Endothelial cell of umbilical vein (primary cell): ENCODE measurements at regions of chr12 and their contacts with region 1.

Region 1: DNA sequence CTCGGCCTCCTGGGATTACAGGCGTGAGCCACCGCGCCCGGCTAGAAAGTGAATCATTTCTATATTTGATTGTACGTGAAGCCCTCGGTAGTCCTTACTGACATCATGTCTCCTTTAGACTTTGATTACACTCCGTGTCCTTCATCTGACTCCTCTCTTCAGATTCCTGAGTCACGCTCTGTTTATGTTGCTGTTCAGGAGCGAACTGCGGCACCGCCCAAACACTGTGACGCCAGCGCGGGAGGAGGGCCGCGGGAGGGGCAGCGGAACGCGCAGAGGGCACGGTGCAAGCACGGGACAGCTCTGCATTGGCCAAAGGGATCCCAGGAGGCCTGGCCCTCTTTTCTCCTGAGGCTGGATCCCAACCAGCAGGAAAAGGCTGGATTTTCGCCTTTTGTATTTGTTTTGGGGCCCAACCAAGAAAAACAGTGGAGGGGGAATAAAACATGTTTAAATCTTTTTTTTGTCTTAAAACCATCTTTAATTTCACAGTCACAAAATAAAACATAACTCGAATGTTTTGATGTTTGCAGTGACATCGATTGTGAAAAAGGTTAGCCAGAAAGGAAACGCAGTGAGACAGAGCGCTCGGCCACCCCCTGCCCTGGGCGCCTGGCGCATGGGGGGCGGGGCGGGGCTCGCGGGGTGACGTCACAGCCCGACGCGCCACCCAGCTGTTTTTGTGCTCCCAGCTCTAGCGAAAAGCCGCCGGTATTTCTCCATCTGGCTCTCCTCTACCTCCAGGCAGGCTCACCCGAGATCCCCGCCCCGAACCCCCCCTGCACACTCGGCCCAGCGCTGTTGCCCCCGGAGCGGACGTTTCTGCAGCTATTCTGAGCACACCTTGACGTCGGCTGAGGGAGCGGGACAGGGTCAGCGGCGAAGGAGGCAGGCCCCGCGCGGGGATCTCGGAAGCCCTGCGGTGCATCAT is at the start of gene GABARAPL1:
- DNase-seq: peak; percentile 100
- H3K4me3 ChIP-seq: peak within 1 kb of the TSS; percentile 46 to 99 (median 93)
- H3K27ac ChIP-seq: peak within 1 kb of the TSS; percentile 96
- H3K4me1 ChIP-seq: peaks cover 11% of the 10 kb centered on the region
- H3K27me3 ChIP-seq: no peaks in the 10 kb centered on the region
- CTCF ChIP-seq: no peak
- POLR2A ChIP-seq: no peak
- total RNA-seq, gene GABARAPL1: 59.4 and 69.0 TPM in 2 replicates

Region 2: DNA sequence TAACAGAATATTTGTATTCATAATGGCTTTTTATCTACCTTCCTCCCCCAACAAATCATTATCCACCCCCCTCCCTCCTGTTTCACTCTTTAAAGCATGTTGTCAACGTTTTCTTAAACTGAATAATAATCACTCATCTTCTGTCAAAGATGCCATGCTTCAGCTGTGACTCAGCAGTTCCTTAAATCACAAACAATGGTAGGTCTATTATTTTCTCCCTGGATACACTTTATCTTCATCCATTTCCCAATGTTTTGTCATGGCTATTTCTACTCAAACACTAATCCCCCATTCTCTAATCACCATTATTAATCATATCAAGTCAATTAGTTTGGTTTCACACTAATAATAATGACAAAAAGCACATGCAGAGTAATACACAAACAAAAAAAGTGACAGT is 195.6 kb before region 1 on chr12:
- CTCF ChIA-PET with region 1: no interaction called
- POLR2A ChIA-PET with region 1: no interaction called
- dilution Hi-C with region 1: no loop called
- intact Hi-C with region 1: loop called (anchors 5 kb)
- DNase-seq: peak; percentile 86
- H3K4me3 ChIP-seq: no peak overlapping the region
- H3K27ac ChIP-seq: peak overlapping the region; percentile 99
- H3K4me1 ChIP-seq: peaks cover 27% of the 10 kb centered on the region
- H3K27me3 ChIP-seq: no peaks in the 10 kb centered on the region
- CTCF ChIP-seq: no peak
- POLR2A ChIP-seq: no peak

Region 3: GRCh38 chr12:10069099-10069498 is 143.4 kb before region 1 on chr12:
- CTCF ChIA-PET with region 1: no interaction called
- POLR2A ChIA-PET with region 1: interaction called, 10 read pairs
- dilution Hi-C with region 1: no loop called
- intact Hi-C with region 1: loop called (anchors 1 kb)
- DNase-seq: peak; percentile 94
- H3K4me3 ChIP-seq: no peak overlapping the region
- H3K27ac ChIP-seq: peak overlapping the region; percentile 98
- H3K4me1 ChIP-seq: peaks cover 44% of the 10 kb centered on the region
- H3K27me3 ChIP-seq: no peaks in the 10 kb centered on the region
- CTCF ChIP-seq: no peak
- POLR2A ChIP-seq: peak; percentile 25

Region 4: DNA sequence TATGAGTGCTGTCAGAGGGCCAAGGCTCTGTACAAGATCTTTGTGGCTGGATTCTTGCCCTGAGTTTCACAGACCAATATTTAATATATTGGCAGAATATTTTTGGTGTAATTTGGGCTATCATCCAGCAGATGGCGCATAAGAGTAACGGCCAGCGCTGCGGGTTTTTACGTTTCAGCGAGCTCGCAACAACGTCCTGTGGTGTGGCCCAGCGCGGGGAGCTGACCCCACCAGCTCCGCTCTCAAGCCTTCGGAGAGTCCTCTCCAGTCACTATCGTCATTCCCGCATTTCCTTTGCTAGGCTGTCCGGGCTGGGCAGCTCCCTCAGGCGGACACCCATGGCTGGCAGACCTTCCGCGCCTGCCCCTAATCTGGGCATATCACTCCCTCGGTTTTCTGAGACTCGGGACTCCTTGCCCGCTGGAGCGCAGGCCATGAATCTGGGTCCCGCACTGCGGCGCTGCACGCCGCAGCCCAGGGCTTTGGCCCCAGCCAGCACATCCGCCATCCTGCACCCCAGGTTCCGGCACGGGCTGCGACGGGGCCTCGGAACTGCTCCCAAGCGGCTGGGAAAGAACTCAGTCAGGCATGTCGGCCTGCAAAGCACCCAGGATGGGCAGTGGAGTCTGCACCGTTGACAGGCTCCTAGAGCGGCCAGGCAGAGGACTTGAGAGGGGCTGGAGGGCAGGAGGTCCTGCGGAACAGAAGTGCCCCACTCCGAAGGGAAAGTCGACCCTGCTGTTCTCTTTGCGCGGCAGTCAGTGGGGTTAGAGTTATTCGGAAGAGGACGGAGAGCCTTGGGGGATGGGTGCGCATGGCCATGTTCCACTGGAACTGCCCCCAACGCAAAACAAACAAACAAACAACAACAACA is 59.0 kb before region 1 on chr12:
- CTCF ChIA-PET with region 1: interaction called, 22 read pairs
- POLR2A ChIA-PET with region 1: interaction called, 5 read pairs
- dilution Hi-C with region 1: no loop called
- intact Hi-C with region 1: loop called (anchors 1 kb)
- DNase-seq: peak; percentile 81
- H3K4me3 ChIP-seq: peak overlapping the region; percentile 44 to 67 (median 48)
- H3K27ac ChIP-seq: peak overlapping the region; percentile 58
- H3K4me1 ChIP-seq: peaks cover 5% of the 10 kb centered on the region
- H3K27me3 ChIP-seq: peaks cover 0 to 2% of the 10 kb centered on the region in 2 experiments
- CTCF ChIP-seq: peak; percentile 70 to 72
- POLR2A ChIP-seq: no peak

Region 5: DNA sequence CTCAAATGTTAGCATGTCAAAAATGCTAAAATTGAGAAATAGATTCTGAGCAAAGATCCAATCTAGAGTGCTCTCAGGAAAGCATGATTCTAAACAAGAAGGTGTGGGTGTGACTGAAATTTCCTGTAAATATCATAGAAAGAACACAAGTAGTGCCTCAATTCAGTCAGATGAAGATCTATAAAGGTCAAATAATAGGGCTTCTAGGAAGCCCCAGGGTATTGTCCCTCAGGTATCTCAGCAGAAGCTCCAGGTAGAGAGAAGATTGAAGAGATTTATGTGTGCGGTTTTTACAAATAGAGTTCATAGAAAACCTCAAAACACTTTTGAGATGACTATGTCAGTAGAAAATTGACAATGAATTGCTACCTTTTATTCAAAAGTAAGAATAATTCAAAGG is 108.2 kb after region 1 on chr12:
- CTCF ChIA-PET with region 1: no interaction called
- POLR2A ChIA-PET with region 1: no interaction called
- dilution Hi-C with region 1: no loop called
- intact Hi-C with region 1: no loop called
- DNase-seq: no peak
- H3K4me3 ChIP-seq: no peak overlapping the region
- H3K27ac ChIP-seq: no peak overlapping the region
- H3K4me1 ChIP-seq: no peaks in the 10 kb centered on the region
- H3K27me3 ChIP-seq: no peaks in the 10 kb centered on the region
- CTCF ChIP-seq: no peak
- POLR2A ChIP-seq: no peak

Region 6: DNA sequence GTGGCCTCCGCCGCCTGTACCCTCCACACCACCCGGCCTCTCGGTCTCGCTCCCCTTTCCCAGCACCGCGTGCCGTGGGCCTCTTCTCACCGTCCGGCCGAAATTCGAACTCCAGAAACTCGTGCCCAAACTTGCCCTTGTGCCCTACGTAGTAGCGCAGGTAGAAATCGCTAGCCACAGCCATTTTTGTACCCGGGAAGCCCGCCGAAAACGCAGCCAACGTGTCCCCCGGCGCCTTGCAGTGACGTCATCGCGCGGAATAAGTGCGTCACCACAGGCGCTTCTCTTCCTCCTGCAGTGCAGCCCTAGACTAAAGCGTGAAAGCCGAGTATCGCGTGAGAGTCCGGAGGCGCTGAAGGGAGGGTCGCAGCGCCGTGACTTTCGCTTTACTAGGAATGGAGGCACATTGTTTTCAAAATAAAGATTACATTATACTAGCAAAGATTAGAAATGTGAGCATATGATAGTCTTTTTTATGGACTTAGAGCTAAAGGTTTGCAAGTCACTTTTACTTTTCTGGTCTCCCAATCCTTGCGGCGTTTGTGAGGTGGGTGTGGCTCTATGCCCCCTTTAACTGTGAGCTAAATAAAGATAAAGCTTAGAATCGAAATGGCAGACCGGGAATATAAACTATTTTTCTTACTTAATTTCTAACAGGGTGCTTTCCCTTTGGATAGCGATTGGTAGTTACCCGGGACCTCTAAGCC is 401.0 kb after region 1 on chr12 and contains the start of gene MAGOHB:
- CTCF ChIA-PET with region 1: no interaction called
- POLR2A ChIA-PET with region 1: no interaction called
- dilution Hi-C with region 1: no loop called
- intact Hi-C with region 1: loop called (anchors 1 kb)
- DNase-seq: peak; percentile 95
- H3K4me3 ChIP-seq: peak within 1 kb of the TSS; percentile 58 to 96 (median 93)
- H3K27ac ChIP-seq: peak within 1 kb of the TSS; percentile 90
- H3K4me1 ChIP-seq: peaks cover 18% of the 10 kb centered on the region
- H3K27me3 ChIP-seq: no peaks in the 10 kb centered on the region
- CTCF ChIP-seq: no peak
- POLR2A ChIP-seq: peak; percentile 70
- total RNA-seq, gene MAGOHB: 45.4 and 48.3 TPM in 2 replicates

Region 7: GRCh38 chr12:10624605-10625004 is 412.1 kb after region 1 on chr12:
- CTCF ChIA-PET with region 1: no interaction called
- POLR2A ChIA-PET with region 1: no interaction called
- dilution Hi-C with region 1: no loop called
- intact Hi-C with region 1: no loop called
- DNase-seq: no peak
- H3K4me3 ChIP-seq: no peak overlapping the region
- H3K27ac ChIP-seq: no peak overlapping the region
- H3K4me1 ChIP-seq: peaks cover 5% of the 10 kb centered on the region
- H3K27me3 ChIP-seq: no peaks in the 10 kb centered on the region
- CTCF ChIP-seq: no peak
- POLR2A ChIP-seq: no peak

Region 8: DNA sequence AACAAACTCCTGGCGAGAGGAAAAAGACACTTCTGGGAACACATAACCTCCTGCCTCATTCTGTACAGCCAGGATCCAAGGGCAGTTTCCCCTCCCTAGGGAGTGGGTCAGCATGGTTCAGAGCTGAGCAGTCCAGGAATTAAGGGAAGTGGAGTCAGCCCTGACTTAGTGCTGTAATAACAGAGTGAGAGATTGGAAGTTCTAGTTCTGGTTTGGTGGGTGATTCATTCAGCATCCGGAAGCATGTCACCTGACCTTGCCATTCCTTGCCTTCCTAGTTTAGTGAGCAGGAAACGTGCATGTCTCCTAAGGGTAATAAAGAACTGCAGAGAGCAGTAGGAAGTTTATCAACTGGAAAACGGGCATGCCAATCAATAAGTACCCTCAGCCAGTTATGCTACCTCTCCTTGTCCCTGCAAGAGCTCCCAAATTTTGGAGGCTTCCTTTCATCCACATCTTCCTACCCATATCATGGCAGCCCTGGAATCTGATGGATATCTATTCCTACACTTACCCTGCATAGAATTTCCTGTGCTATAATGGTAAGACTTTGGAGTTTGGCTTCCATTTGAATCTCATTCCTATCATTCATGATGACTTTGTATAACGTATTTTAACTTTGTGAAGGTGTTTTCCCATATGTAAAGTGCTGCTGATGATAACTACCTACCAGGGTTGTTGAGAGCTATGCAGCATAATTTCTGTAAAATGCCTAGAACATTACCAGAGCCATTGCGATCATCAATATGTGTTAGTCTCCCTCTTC is 429.5 kb after region 1 on chr12:
- CTCF ChIA-PET with region 1: no interaction called
- POLR2A ChIA-PET with region 1: no interaction called
- dilution Hi-C with region 1: no loop called
- intact Hi-C with region 1: loop called (anchors 1 kb)
- DNase-seq: peak; percentile 99
- H3K4me3 ChIP-seq: peak overlapping the region in 1 of 3 experiments; percentile 43
- H3K27ac ChIP-seq: peak overlapping the region; percentile 98
- H3K4me1 ChIP-seq: peaks cover 48% of the 10 kb centered on the region
- H3K27me3 ChIP-seq: no peaks in the 10 kb centered on the region
- CTCF ChIP-seq: no peak
- POLR2A ChIP-seq: peak; percentile 95

Region 9: GRCh38 chr12:10721651-10722501 is 509.4 kb after region 1 on chr12:
- CTCF ChIA-PET with region 1: no interaction called
- POLR2A ChIA-PET with region 1: no interaction called
- dilution Hi-C with region 1: no loop called
- intact Hi-C with region 1: loop called (anchors 1 kb)
- DNase-seq: peak; percentile 100
- H3K4me3 ChIP-seq: peak overlapping the region; percentile 87 to 92 (median 88)
- H3K27ac ChIP-seq: peak overlapping the region; percentile 98
- H3K4me1 ChIP-seq: peaks cover 57% of the 10 kb centered on the region
- H3K27me3 ChIP-seq: no peaks in the 10 kb centered on the region
- CTCF ChIP-seq: no peak
- POLR2A ChIP-seq: peak; percentile 39